ENCODE measurements at regions of chr16 and their contacts with region 1.

Region 1: DNA sequence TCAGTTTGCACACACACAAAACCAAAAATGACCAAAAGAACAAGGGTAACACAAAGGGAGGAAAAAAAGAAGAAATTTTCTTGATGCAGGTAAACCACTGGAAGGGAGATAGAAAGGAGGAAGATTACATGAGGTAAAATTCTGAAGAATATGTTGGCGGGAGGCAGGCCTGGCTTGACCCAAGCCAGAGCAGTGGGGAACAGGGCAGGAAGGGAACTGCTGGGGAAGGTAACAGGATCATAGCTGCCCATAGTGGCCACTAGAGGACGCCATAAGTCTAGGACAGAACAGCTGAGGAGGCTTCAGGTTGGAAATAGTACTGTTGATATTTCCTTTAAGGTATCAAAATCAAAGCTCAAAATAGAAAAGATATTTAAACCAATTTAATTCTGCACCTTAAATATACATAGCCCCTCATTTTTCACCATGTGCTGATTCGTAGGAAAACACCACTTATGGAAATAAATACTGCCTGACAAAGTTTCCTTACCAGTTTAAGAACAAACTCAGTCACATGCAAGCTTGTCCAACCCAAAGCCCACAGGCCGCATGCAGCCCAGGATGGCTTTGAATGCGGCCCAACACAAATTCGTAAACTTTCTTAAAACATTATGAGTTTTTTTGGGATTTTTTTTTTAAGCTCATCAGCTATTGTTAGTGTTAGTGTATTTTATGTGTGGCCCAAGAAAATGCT is 15.5 kb downstream of the VPS35 start:
- DNase-seq: peak; percentile 79
- ATAC-seq: peak; percentile 100
- H3K4me3 ChIP-seq: no peak overlapping the region
- H3K27ac ChIP-seq: no peak overlapping the region
- H3K4me1 ChIP-seq: peaks cover 13% of the 10 kb centered on the region
- H3K27me3 ChIP-seq: no peaks in the 10 kb centered on the region
- CTCF ChIP-seq: peak; percentile 94
- EP300 ChIP-seq: no peak
- POLR2A ChIP-seq: no peak
- RAD21 ChIP-seq: peak; percentile 91

Region 2: GRCh38 chr16:46583036-46583435 is 90.4 kb before region 1 on chr16:
- CTCF ChIA-PET with region 1: no interaction called
- POLR2A ChIA-PET with region 1: no interaction called
- in situ Hi-C with region 1: no loop called
- intact Hi-C with region 1: no loop called
- DNase-seq: no peak
- ATAC-seq: no peak
- H3K4me3 ChIP-seq: no peak overlapping the region
- H3K27ac ChIP-seq: no peak overlapping the region
- H3K4me1 ChIP-seq: no peaks in the 10 kb centered on the region
- H3K27me3 ChIP-seq: no peaks in the 10 kb centered on the region; a peak in 1 of 5 replicates
- CTCF ChIP-seq: no peak
- EP300 ChIP-seq: no peak
- POLR2A ChIP-seq: no peak
- RAD21 ChIP-seq: no peak

Region 3: DNA sequence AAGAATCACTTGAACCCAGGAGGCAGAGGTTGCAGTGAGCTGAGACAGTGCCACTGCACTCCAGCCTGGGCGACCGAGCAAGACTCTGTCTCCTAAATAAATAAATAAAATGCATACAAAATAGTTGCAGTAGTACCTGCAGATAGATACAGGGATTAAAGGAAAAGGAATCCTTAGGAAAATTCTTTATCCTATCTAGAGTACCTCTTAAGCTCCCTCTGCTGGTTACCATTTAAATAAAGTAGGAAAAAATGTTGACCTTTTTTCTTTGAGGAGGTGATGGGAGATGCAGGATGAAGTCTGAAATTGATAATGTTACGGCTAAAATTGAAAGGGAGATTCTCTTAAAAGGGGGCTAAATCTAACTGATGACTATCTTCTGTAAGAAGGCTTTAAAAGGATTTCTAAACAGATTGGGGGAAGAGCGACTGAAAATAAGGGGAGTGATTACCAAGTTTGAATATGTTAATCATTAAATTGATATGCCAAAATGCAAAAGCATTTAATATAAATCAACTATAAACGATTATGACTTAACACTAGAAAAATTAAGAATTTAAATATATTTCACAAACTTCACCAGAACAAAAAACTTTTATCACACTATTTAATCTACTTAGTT is 128.1 kb after region 1 on chr16:
- CTCF ChIA-PET with region 1: interaction called, 35 read pairs
- POLR2A ChIA-PET with region 1: interaction called, 6 read pairs
- in situ Hi-C with region 1: no loop called
- intact Hi-C with region 1: loop called (anchors 1 kb)
- DNase-seq: peak; percentile 43
- ATAC-seq: peak; percentile 46; the same call in 1 of the 3 replicates
- H3K4me3 ChIP-seq: no peak overlapping the region
- H3K27ac ChIP-seq: no peak overlapping the region
- H3K4me1 ChIP-seq: no peaks in the 10 kb centered on the region
- H3K27me3 ChIP-seq: no peaks in the 10 kb centered on the region
- CTCF ChIP-seq: peak; percentile 53
- EP300 ChIP-seq: no peak
- POLR2A ChIP-seq: no peak
- RAD21 ChIP-seq: 0 out of 2 replicates have a peak, but pooled peaks have one; percentile 32

Measured in HepG2 (cell line).